SK-N-SH (cell line): ENCODE measurements at regions of chr2 and their contacts with region 1.

Region 1: GRCh38 chr2:109138449-109138848 is 9.4 kb downstream of the SH3RF3 start:
- DNase-seq: no peak
- H3K4me3 ChIP-seq: no peak overlapping the region
- H3K27ac ChIP-seq: no peak overlapping the region; a peak in 1 of 4 replicates
- H3K4me1 ChIP-seq: peaks cover 6 to 46% of the 10 kb centered on the region in 2 experiments; a peak in 2 of 4 replicates
- H3K27me3 ChIP-seq: no peaks in the 10 kb centered on the region
- CTCF ChIP-seq: no peak
- EP300 ChIP-seq: no peak
- RAD21 ChIP-seq: no peak

Region 2: DNA sequence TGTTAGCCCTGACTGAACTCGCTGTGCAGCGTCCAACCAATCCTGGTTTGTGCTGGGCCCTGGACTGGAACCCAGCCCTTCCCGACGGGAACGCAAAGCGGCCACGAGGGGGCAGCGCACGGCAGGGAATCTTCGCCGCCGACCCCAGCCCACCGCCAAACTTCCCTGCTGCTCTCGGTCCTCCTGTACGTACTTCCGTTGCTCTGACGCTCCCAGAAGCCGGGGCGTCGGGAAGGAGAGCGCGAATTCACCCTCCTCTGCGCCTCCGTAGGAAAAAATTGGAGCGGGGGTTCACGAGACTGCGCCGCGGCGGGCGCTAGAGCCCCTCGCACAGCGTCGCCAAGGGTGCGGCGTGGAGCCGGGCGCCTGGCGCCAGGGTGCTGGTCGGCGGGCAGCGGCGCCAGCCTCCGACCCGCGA is 10.4 kb before region 1 on chr2:
- CTCF ChIA-PET with region 1: interaction called, 11 read pairs
- POLR2A ChIA-PET with region 1: no interaction called
- DNase-seq: peak; percentile 96
- H3K4me3 ChIP-seq: peak overlapping the region; percentile 70 to 80
- H3K27ac ChIP-seq: peak overlapping the region; percentile 53 to 56; a peak in 3 of 4 replicates
- H3K4me1 ChIP-seq: peaks cover 19 to 29% of the 10 kb centered on the region in 2 experiments
- H3K27me3 ChIP-seq: no peaks in the 10 kb centered on the region
- CTCF ChIP-seq: peak; percentile 90; the same call in 1 of the 2 replicates
- EP300 ChIP-seq: no peak
- RAD21 ChIP-seq: peak; percentile 98

Region 3: GRCh38 chr2:109185821-109186570 is 47.5 kb after region 1 on chr2:
- CTCF ChIA-PET with region 1: no interaction called
- POLR2A ChIA-PET with region 1: no interaction called
- DNase-seq: no peak
- H3K4me3 ChIP-seq: peak overlapping the region in 1 of 2 experiments; percentile 5; a peak in 2 of 4 replicates
- H3K27ac ChIP-seq: peak overlapping the region; percentile 86 to 95
- H3K4me1 ChIP-seq: peaks cover 5 to 29% of the 10 kb centered on the region in 2 experiments; a peak in 2 of 4 replicates
- H3K27me3 ChIP-seq: no peaks in the 10 kb centered on the region
- CTCF ChIP-seq: no peak; the same call in 1 of the 2 replicates
- EP300 ChIP-seq: peak in 1 of 2 experiments; percentile 63; a peak in 2 of 4 replicates
- RAD21 ChIP-seq: no peak